Activated T-helper 1 cell treated with anti-CD3 and anti-CD28 coated beads, Interleukin-12 subunit alpha, Interleukin-12 subunit beta, Interleukin-2, Interleukin-4 antibody, amounts not matched to agents 30 ng/mL and 10 ng/mL and 1 ng/mL, durations not matched to agents 14 hours and 24 hours and 36 hours (primary cell): ENCODE measurements at regions of chr6 and their contacts with region 1.

Region 1: GRCh38 chr6:31680840-31681671 is at the start of gene LY6G5C:
- DNase-seq: peak; percentile 30
- H3K4me3 Mint-ChIP-seq: peak within 1 kb of the TSS; percentile 80
- H3K27ac Mint-ChIP-seq: peak within 1 kb of the TSS; percentile 73
- H3K4me1 Mint-ChIP-seq: peaks cover 24% of the 10 kb centered on the region
- H3K27me3 Mint-ChIP-seq: no peaks in the 10 kb centered on the region
- total RNA-seq, gene LY6G5C: 4.7 and 4.9 TPM in 2 replicates

Region 2: GRCh38 chr6:31614684-31615578 is 66.1 kb before region 1 on chr6 and contains the start of gene AIF1:
- intact Hi-C with region 1: no loop called
- DNase-seq: no peak
- H3K4me3 Mint-ChIP-seq: peak within 1 kb of the TSS; percentile 74
- H3K27ac Mint-ChIP-seq: peak within 1 kb of the TSS; percentile 72
- H3K4me1 Mint-ChIP-seq: peaks cover 28% of the 10 kb centered on the region
- H3K27me3 Mint-ChIP-seq: no peaks in the 10 kb centered on the region
- total RNA-seq, gene AIF1: 55.5 and 61.5 TPM in 2 replicates

Region 3: GRCh38 chr6:31769684-31770371 is 88.8 kb after region 1 on chr6:
- intact Hi-C with region 1: loop called (anchors 1 kb)
- DNase-seq: peak; percentile 79
- H3K4me3 Mint-ChIP-seq: no peak overlapping the region
- H3K27ac Mint-ChIP-seq: peak overlapping the region; percentile 3
- H3K4me1 Mint-ChIP-seq: peaks cover 27% of the 10 kb centered on the region
- H3K27me3 Mint-ChIP-seq: no peaks in the 10 kb centered on the region

Region 4: DNA sequence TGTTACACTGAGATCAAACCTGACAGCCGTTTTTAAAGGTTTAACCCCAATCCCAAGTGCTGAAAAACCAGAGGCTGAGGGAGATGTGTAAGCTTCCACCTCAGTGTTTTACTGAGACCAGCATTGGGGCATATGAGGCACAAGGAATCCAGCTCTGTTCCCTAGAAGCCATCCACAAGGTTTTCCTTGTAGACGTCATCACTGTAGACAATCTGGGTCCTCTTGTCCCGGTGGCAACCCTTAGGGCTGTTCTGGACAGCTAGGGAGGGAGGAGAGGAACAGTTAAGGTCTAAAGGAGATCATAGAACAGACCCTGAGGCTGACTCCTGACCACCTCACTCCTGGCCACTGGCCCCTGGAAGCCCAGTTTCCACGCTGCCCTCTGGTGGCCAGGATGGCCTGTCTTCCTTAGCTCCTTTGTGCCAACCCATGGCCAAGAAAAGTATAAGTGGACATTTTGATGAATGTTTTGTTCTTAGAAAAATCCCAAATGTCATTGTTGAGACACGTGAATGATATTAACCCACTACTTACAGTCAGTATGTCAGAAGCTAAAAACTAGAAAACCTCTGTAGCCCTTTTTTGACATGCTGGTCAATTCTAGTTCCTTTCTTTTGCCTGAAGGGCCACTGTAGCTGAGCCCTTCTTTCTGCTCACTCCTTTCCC is 271.2 kb after region 1 on chr6:
- intact Hi-C with region 1: loop called (anchors 1 kb)
- DNase-seq: no peak
- H3K4me3 Mint-ChIP-seq: no peak overlapping the region
- H3K27ac Mint-ChIP-seq: no peak overlapping the region
- H3K4me1 Mint-ChIP-seq: peaks cover 3% of the 10 kb centered on the region
- H3K27me3 Mint-ChIP-seq: no peaks in the 10 kb centered on the region

Region 5: DNA sequence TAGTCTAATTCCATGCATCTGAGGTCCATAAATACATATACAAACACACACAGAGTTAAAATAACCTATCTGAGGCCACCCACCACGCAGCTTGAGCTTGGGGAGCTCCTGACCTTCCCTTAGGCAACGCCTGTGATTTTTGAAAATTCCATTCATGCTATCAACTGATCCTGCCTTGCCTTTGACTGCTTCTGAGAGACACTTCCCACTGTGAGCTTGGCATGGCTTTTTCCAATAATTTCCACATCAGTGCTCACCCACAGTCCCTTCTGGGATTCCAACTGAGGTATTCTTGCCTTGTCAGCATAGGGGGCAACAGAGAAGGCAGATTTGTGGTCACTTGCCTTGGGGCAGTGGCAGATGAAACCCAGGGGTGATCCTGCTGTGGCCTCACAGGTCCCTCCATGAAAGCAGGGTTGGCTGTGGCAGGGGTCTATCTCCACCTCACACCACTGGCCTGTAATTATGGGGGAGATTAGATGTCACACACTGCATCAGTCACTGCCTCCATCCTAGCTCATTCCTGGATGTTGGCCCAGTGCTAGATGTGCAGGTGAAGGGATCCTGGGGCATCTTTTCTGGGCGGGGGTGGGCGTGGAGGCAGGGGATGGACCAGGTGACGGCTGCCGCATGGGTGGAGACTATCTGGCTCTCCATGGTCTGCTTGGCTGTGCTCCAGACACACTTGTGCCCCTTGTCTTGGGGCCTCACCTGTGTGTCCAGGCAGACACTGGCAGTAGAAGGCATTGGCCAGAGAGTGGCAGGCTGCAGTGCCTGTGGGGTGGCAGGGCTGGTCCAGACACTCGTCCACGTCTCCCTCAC is 522.6 kb after region 1 on chr6:
- intact Hi-C with region 1: no loop called
- DNase-seq: no peak
- H3K4me3 Mint-ChIP-seq: no peak overlapping the region
- H3K27ac Mint-ChIP-seq: no peak overlapping the region
- H3K4me1 Mint-ChIP-seq: no peaks in the 10 kb centered on the region
- H3K27me3 Mint-ChIP-seq: peaks cover 25% of the 10 kb centered on the region